Gastrocnemius medialis (tissue), 4 donors: ENCODE measurements at regions of chr7 and their contacts with region 1.

Region 1: DNA sequence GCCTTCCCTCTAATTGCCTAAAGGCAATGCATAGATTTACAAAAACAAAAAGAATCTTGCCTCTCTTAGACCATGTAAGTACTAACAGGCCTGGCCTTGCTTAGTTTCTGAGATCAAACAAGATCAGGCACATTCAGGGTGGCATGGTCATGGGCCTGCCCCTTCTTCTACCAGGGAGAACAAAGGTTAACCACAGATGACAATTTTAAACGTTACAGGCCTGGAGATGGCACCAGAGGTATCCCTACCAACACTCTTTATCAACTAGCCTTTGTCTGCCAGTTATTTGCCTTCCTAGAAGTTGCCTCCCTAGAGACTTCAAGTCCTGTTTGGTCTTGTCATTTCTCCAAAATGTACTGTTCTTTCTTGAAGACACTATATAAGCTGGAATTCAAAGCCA is 252.6 kb downstream of the DOCK4 start:
- DNase-seq: no peak
- ATAC-seq: peak; percentile 68 to 75
- H3K4me3 ChIP-seq: no peak overlapping the region
- H3K27ac ChIP-seq: no peak overlapping the region
- H3K4me1 ChIP-seq: peaks cover 0 to 13% of the 10 kb centered on the region in 2 donors
- H3K27me3 ChIP-seq: no peaks in the 10 kb centered on the region
- CTCF ChIP-seq: peak in 3 of 5 experiments; percentile 8 to 36 (median 15)
- POLR2A ChIP-seq: no peak

Region 2: GRCh38 chr7:112422842-112423496 is 469.4 kb after region 1 on chr7:
- in situ Hi-C with region 1: loop called in 3 of 4 experiments (anchors 25 kb)
- intact Hi-C with region 1: no loop called
- DNase-seq: peak; percentile 71 to 79
- ATAC-seq: peak; percentile 89 to 91
- H3K4me3 ChIP-seq: no peak overlapping the region
- H3K27ac ChIP-seq: peak overlapping the region; percentile 71 to 78 (median 73)
- H3K4me1 ChIP-seq: peaks cover 7 to 25% of the 10 kb centered on the region in 2 donors
- H3K27me3 ChIP-seq: no peaks in the 10 kb centered on the region
- CTCF ChIP-seq: no peak
- POLR2A ChIP-seq: no peak